H1 (cell line): ENCODE measurements at regions of chr1 and their contacts with region 1.

Region 1: DNA sequence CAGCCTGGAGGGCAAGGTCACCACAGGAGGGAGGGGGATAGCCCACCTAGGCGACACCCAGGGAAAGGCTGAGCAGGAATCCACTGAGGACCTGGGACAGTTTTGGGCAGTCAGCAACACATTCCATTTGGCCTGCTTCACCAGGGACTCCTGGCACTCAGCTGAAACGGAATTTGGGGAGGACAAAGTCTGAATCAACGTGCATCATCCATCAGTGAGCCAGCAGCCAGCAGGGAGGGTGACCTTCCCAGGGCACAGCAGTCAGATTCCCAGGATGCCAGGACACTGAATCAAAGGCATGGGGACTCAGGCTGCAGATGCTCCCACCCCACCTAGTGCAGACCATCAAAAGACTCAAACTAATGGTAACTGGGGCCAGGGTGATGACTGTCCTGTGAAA is 4.6 kb downstream of the SH3BP5L start:
- DNase-seq: no peak
- H3K4me3 ChIP-seq: no peak overlapping the region
- H3K27ac ChIP-seq: no peak overlapping the region
- H3K4me1 ChIP-seq: peaks cover 0 to 5% (median 3%) of the 10 kb centered on the region in 4 experiments; a peak in 6 of 7 replicates
- H3K27me3 ChIP-seq: no peaks in the 10 kb centered on the region
- CTCF ChIP-seq: no peak
- EP300 ChIP-seq: no peak
- POLR2A ChIP-seq: no peak
- RAD21 ChIP-seq: no peak

Region 2: GRCh38 chr1:248681651-248682050 is 139.4 kb before region 1 on chr1:
- CTCF ChIA-PET with region 1: no interaction called
- POLR2A ChIA-PET with region 1: no interaction called
- DNase-seq: no peak
- H3K4me3 ChIP-seq: no peak overlapping the region
- H3K27ac ChIP-seq: no peak overlapping the region
- H3K4me1 ChIP-seq: no peaks in the 10 kb centered on the region
- H3K27me3 ChIP-seq: no peaks in the 10 kb centered on the region
- CTCF ChIP-seq: no peak
- EP300 ChIP-seq: no peak
- POLR2A ChIP-seq: no peak
- RAD21 ChIP-seq: no peak

Region 3: DNA sequence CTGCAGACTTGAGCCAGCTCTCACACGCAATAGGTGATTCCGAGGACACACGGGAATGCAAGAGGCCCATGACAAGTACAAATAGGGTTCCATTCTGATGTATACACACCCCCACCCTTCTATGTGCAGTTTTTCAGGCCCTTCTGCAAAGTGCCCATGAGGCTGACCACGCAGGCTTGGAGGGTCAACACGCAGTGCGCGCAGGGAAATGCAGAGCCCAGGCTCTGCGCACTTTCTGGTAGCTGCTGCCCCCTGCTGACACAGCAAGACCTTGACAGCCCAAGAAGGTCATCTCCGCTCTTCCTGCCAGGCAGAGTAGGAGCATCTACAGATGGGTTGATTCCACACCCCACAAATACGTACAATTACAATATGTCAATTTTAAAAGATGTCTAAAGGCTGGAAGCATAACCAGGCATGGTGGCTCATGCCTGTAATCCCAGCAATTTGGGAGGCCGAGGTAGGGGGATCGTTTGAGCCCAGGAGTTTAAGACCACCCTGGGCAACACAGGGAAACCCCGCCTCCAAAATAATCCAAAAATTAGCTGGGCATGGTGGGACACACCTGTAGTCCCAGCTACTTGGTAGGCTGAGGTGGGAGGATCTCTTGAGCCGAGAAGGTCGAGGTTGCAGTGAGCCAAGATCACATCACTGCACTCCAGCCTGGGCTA is 13.9 kb before region 1 on chr1:
- CTCF ChIA-PET with region 1: interaction called, 14 read pairs
- POLR2A ChIA-PET with region 1: interaction called, 8 read pairs
- DNase-seq: peak in 1 of 2 experiments; percentile 76
- H3K4me3 ChIP-seq: no peak overlapping the region
- H3K27ac ChIP-seq: no peak overlapping the region
- H3K4me1 ChIP-seq: no peaks in the 10 kb centered on the region
- H3K27me3 ChIP-seq: no peaks in the 10 kb centered on the region
- CTCF ChIP-seq: peak; percentile 82 to 86 (median 83)
- EP300 ChIP-seq: no peak
- POLR2A ChIP-seq: no peak
- RAD21 ChIP-seq: peak; percentile 85 to 91